Heart left ventricle (tissue), 16 donors: ENCODE measurements at regions of chr5 and their contacts with region 1.

Region 1: GRCh38 chr5:152514827-152515397 is 109.8 kb upstream of the NMUR2 start:
- DNase-seq: no peak
- ATAC-seq: peak in 1 of 4 donors; percentile 38
- H3K4me3 ChIP-seq: no peak overlapping the region
- H3K27ac ChIP-seq: no peak overlapping the region
- H3K4me1 ChIP-seq: peaks cover 0 to 6% (median 0%) of the 10 kb centered on the region in 12 donors
- H3K27me3 ChIP-seq: peaks cover 0 to 3% (median 0%) of the 10 kb centered on the region in 9 donors
- CTCF ChIP-seq: peak; percentile 20 to 51 (median 31)
- POLR2A ChIP-seq: no peak

Region 2: DNA sequence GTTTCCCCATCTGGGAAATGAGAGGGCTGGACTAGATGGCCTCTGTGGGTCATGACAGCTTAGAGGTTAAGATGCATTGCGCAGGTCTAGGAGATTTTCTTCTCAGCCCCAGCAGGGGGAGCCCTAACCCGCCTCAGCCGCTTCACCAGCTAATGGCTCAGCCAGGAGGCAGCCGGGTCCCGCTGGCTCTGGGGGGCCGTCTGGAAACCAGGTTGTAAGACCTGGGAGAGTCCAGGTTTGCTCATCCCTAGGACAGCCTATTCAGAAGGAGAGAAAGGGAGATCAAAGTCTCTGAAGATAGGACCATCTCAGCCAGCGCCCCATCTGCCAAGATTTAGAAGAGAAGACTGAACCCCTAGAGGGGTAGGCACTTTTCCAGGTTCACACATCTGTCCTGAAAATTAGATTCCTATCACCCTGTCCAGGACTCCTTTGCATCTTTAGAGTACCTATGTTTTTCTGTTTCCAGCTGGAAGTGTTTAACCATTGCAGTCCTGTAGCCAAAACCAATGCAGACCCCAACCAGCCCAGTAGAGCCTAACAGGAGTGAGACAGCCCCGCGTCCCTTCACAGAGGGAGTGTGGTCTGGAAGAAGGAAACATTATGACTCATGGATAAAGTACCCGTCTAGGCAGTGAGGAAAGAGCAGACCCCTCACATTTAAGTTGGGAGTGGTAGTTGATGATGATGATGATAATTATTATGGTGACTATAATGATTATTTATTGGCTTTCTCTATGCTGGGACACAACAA is 855.7 kb before region 1 on chr5:
- intact Hi-C with region 1: loop called in 1 of 10 experiments (anchors 10 kb)
- DNase-seq: peak; percentile 84 to 92 (median 87)
- ATAC-seq: peak; percentile 75 to 87 (median 86)
- H3K4me3 ChIP-seq: no peak overlapping the region
- H3K27ac ChIP-seq: peak overlapping the region in 9 of 12 donors; percentile 4 to 52 (median 28)
- H3K4me1 ChIP-seq: peaks cover 3 to 39% (median 23%) of the 10 kb centered on the region in 12 donors
- H3K27me3 ChIP-seq: no peaks in the 10 kb centered on the region
- CTCF ChIP-seq: peak; percentile 80 to 98 (median 92)
- POLR2A ChIP-seq: no peak

Region 3: DNA sequence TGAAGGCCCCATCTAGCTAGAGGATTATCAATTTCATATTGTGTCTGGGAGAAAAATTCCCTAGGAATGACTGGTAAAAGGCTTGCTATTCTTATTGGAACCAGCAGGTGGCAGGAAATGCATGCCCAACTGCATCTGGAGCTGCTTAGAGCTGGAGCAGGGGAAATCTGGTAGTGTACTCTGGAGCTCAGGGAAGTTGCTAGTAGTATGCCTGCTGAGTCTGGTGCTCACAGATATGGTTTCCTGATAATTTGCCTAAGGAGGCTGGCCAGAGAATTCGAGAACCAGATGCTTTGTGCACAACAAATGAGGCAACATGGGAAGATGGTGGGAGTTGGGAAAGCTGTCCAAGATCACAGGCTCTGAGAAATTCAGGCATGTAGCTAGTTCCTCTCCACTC is 689.5 kb before region 1 on chr5:
- intact Hi-C with region 1: loop called in 1 of 10 experiments (anchors 5 kb)
- DNase-seq: peak in 4 of 5 donors; percentile 44 to 72 (median 56)
- ATAC-seq: peak; percentile 88 to 94 (median 90)
- H3K4me3 ChIP-seq: no peak overlapping the region
- H3K27ac ChIP-seq: no peak overlapping the region
- H3K4me1 ChIP-seq: peaks cover 0 to 17% (median 1%) of the 10 kb centered on the region in 12 donors
- H3K27me3 ChIP-seq: no peaks in the 10 kb centered on the region
- CTCF ChIP-seq: peak; percentile 74 to 93 (median 88)
- POLR2A ChIP-seq: no peak

Region 4: DNA sequence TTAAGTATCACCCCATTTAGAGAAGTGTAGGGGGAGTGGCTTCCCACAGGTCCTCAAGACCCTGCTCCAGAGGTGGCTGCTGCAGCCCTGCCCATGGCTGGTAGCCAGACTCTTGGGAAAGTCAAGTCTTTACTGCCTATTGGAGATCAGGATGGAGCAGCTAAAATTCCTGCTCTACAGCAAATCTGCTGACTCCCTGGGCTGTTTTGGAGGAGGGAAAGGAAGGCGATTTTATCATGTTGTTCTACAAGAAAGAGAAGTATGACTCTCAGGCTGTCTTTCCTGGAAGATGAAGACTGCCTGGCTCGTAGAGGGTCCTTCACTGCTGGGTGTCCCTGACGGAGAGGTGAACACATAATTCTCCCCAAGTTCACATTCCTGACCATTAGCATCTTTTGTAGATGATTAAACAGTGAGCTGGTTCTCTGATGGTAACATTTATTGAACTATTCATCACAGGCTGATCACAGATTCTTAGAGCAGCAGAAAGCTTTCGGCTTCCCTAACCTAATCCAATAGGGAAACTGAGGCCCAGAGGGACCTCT is 377.9 kb before region 1 on chr5:
- intact Hi-C with region 1: loop called in 1 of 10 experiments (anchors 10 kb)
- DNase-seq: no peak
- ATAC-seq: no peak
- H3K4me3 ChIP-seq: no peak overlapping the region
- H3K27ac ChIP-seq: no peak overlapping the region
- H3K4me1 ChIP-seq: no peaks in the 10 kb centered on the region
- H3K27me3 ChIP-seq: no peaks in the 10 kb centered on the region
- CTCF ChIP-seq: no peak
- POLR2A ChIP-seq: no peak